CD4-positive, alpha-beta memory T cell (primary cell): ENCODE measurements at regions of chr1 and their contacts with region 1.

Region 1: DNA sequence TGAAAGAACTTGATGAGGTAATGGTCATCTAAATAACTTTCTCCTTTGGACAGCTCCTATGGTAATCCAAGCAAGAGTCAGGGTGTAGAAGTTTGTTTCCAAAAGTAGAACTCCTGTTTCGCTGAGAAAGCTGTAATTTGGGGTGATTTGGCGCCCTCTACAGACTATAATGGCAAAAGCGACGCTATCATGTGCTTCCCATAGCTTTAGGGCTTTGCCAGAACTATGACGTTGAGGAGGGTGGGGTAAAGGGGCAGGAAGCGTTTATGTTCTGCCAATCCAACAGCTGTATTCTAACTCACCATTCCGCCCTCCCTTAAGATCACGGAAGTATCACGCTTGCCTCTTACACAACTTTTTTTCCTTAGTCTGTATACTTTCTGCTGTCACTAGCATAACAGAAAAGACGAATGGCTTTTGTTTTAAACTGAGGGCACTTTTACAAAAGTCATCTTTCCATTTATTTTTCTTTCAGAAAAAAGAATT is at the start of gene FMO4:
- DNase-seq: peak; percentile 85 to 94 (median 92)
- H3K4me3 ChIP-seq: peak within 1 kb of the TSS in 1 of 2 donors; percentile 21
- H3K4me3 Mint-ChIP-seq: peak within 1 kb of the TSS; percentile 67 to 85 (median 80)
- H3K27ac ChIP-seq: peak within 1 kb of the TSS; percentile 54
- H3K27ac Mint-ChIP-seq: peak within 1 kb of the TSS; percentile 72 to 94 (median 92)
- H3K4me1 ChIP-seq: peaks cover 9% of the 10 kb centered on the region
- H3K4me1 Mint-ChIP-seq: peaks cover 11 to 26% (median 21%) of the 10 kb centered on the region in 4 donors
- H3K27me3 ChIP-seq: no peaks in the 10 kb centered on the region
- H3K27me3 Mint-ChIP-seq: no peaks in the 10 kb centered on the region
- total RNA-seq, gene FMO4: 2.7 to 3.6 TPM

Region 2: GRCh38 chr1:170531758-170532657 is 781.9 kb before region 1 on chr1 and contains the start of gene GORAB:
- CTCF ChIA-PET with region 1: interaction called, 6 read pairs
- POLR2A ChIA-PET with region 1: interaction called, 5 read pairs
- intact Hi-C with region 1: loop called (anchors 5 kb)
- DNase-seq: peak; percentile 84 to 93 (median 90)
- H3K4me3 ChIP-seq: peak within 1 kb of the TSS; percentile 87 to 90
- H3K4me3 Mint-ChIP-seq: no peak within 1 kb of the TSS
- H3K27ac ChIP-seq: peak within 1 kb of the TSS; percentile 92
- H3K27ac Mint-ChIP-seq: peak within 1 kb of the TSS in 3 of 7 donors; percentile 44 to 75 (median 51)
- H3K4me1 ChIP-seq: peaks cover 27% of the 10 kb centered on the region
- H3K4me1 Mint-ChIP-seq: peaks cover 11 to 22% (median 12%) of the 10 kb centered on the region in 4 donors
- H3K27me3 ChIP-seq: no peaks in the 10 kb centered on the region
- H3K27me3 Mint-ChIP-seq: no peaks in the 10 kb centered on the region
- total RNA-seq, gene GORAB: 17.0 to 24.1 TPM

Region 3: DNA sequence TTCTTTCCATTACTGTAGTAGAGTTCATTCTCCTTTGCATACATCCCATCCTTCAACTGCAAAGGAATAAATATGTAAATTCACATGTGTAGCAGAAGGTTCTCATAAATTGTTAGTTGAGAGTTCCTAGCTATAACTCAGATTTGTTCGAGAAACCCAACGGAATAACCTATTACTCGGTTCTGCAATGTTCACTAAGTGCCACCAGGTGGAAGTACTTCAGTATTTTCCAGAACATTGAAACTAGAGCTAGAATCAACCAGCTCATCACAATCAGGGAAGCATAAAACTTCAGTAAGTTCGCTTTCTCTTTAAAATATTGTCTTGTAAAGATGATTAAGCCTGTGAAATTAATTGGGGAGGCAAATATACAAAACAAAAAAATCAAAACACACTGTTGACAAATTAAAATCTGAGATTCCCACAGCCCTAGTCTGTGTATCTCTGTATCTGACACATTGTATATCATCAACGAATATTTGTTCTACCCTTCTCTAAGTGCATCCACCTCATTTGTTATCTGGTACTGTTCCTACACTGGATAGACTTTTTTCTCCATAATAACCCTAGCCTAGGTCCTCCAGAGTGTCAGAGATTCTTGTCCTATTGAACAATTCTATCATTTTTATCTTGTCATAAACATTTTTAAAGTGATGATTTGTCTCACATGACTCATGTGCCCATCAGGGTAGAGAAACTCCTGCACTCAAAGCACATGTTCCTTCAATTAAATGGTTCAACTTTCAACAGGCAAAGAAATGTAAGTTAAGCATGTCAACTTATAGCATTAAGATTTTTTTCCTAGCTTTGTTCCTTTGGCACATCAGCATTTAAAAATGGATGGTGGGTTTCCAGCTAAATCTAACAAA is 346.6 kb before region 1 on chr1:
- CTCF ChIA-PET with region 1: interaction called, 51 read pairs
- POLR2A ChIA-PET with region 1: interaction called, 5 read pairs
- intact Hi-C with region 1: no loop called
- DNase-seq: peak in 4 of 5 donors; percentile 0 to 7 (median 4)
- H3K4me3 ChIP-seq: no peak overlapping the region
- H3K4me3 Mint-ChIP-seq: no peak overlapping the region
- H3K27ac ChIP-seq: no peak overlapping the region
- H3K27ac Mint-ChIP-seq: no peak overlapping the region
- H3K4me1 ChIP-seq: no peaks in the 10 kb centered on the region
- H3K4me1 Mint-ChIP-seq: no peaks in the 10 kb centered on the region
- H3K27me3 ChIP-seq: no peaks in the 10 kb centered on the region
- H3K27me3 Mint-ChIP-seq: peaks cover 9 to 12% of the 10 kb centered on the region in 2 donors

Region 4: DNA sequence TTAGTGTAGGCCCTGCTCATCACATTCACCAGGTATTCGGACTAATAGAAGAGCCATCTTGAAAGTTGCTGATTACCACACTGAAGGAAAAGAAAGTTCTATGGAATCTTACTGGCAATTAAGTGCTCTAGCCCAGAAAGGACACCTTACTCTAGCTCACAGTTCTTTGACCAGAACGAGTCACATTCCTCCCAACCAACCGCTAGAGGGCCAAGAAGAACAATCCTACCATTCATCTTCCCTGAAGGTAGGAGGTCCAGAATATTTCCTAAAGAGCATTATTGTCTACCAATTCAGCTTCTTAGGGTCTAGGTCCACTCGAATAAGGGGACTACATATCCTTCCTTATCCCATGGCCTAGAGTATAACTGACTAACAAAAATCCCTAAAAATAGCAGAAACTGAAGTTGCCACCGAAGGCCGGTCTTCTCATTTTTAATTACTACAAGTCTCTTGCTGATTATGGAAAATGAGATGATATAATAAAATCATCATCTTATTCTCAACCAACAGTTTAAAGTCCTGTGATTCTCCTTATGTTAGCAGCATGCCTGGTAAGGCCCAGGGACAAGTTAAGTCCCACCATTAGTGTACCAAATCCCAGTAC is 68.3 kb before region 1 on chr1:
- CTCF ChIA-PET with region 1: interaction called, 152 read pairs
- POLR2A ChIA-PET with region 1: interaction called, 8 read pairs
- intact Hi-C with region 1: loop called (anchors 1 kb)
- DNase-seq: peak in 4 of 5 donors; percentile 9 to 20 (median 16)
- H3K4me3 ChIP-seq: no peak overlapping the region
- H3K4me3 Mint-ChIP-seq: no peak overlapping the region
- H3K27ac ChIP-seq: no peak overlapping the region
- H3K27ac Mint-ChIP-seq: no peak overlapping the region
- H3K4me1 ChIP-seq: no peaks in the 10 kb centered on the region
- H3K4me1 Mint-ChIP-seq: no peaks in the 10 kb centered on the region
- H3K27me3 ChIP-seq: no peaks in the 10 kb centered on the region
- H3K27me3 Mint-ChIP-seq: peaks cover 0 to 14% of the 10 kb centered on the region in 2 donors

Region 5: DNA sequence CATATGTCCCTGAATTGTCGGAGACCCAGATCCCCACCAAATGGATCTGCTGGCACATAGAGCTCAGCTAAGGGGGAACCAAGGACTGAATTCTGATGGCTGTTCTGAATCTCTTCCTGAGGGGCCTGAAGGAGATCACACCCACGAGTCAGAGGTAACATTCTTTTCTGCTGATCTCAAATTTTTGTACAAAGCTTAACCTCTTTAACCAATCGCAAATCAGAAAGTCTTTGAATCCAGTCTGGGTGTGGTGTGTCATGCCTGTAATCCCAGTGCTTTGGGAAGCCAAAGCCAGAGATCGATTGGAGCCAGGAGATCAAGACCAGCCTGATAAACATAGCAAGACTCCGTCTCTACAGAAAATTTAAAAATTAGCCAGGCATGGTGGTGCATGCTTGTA is 108.6 kb after region 1 on chr1:
- CTCF ChIA-PET with region 1: interaction called, 15 read pairs
- POLR2A ChIA-PET with region 1: interaction called, 3 read pairs
- intact Hi-C with region 1: no loop called
- DNase-seq: no peak
- H3K4me3 ChIP-seq: no peak overlapping the region
- H3K4me3 Mint-ChIP-seq: no peak overlapping the region
- H3K27ac ChIP-seq: no peak overlapping the region
- H3K27ac Mint-ChIP-seq: peak overlapping the region in 4 of 7 donors; percentile 7 to 73 (median 38)
- H3K4me1 ChIP-seq: peaks cover 32% of the 10 kb centered on the region
- H3K4me1 Mint-ChIP-seq: peaks cover 21 to 38% (median 28%) of the 10 kb centered on the region in 4 donors
- H3K27me3 ChIP-seq: no peaks in the 10 kb centered on the region
- H3K27me3 Mint-ChIP-seq: no peaks in the 10 kb centered on the region